Sigmoid colon (tissue), 7 donors: ENCODE measurements at regions of chr15 and their contacts with region 1.

Region 1: DNA sequence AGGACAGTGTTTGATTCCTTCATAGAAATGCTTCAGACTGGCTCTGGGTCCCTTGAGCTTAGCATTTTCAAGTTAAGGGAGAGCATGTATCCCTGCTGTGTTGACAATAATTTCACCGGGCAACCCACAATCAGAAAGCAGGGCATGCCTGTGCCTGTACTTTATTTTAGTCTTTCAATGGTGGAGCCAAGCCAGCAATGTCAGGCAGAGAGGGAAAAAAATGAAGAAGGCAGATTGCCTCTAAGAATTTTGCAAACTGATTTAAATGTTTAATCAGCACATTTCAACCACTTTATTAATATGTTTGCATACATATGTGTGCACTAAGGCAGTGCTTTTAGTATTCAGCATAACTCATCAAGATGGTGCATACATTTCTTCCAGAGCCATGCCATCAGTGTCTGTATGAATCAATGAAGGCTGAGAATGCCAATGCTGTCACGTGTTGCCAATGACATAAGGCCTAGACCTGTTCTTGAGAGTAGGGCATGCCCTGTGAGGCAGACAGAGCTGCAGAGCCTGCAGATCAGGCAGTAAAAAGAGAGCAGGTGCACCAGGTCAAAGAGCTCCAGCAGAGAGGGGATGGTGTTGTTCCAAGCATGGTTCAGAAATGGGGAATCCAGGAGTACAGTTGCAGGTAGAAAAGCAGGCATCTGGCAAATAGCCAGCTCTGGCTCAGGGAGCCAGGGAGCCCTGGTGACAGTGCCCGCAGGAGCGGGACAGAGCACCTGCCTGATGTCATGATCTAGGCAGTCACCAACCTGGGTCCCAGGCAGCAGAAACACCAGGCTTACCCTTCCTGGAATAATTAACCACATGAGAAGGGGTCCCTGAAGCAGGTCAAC is 508.5 kb downstream of the GABRG3 start:
- DNase-seq: no peak
- H3K4me3 ChIP-seq: no peak overlapping the region
- H3K27ac ChIP-seq: no peak overlapping the region
- H3K4me1 ChIP-seq: no peaks in the 10 kb centered on the region
- H3K27me3 ChIP-seq: no peaks in the 10 kb centered on the region
- CTCF ChIP-seq: no peak
- EP300 ChIP-seq: no peak
- POLR2A ChIP-seq: no peak

Region 2: GRCh38 chr15:27527490-27528067 is 48.1 kb after region 1 on chr15:
- intact Hi-C with region 1: loop called (anchors 10 kb)
- DNase-seq: no peak
- H3K4me3 ChIP-seq: no peak overlapping the region
- H3K27ac ChIP-seq: no peak overlapping the region
- H3K4me1 ChIP-seq: no peaks in the 10 kb centered on the region
- H3K27me3 ChIP-seq: no peaks in the 10 kb centered on the region
- CTCF ChIP-seq: no peak
- EP300 ChIP-seq: no peak
- POLR2A ChIP-seq: no peak